Activated naive CD4-positive, alpha-beta T cell treated with anti-CD3 and anti-CD28 coated beads for 36 hours (primary cell): ENCODE measurements at regions of chr9 and their contacts with region 1.

Region 1: DNA sequence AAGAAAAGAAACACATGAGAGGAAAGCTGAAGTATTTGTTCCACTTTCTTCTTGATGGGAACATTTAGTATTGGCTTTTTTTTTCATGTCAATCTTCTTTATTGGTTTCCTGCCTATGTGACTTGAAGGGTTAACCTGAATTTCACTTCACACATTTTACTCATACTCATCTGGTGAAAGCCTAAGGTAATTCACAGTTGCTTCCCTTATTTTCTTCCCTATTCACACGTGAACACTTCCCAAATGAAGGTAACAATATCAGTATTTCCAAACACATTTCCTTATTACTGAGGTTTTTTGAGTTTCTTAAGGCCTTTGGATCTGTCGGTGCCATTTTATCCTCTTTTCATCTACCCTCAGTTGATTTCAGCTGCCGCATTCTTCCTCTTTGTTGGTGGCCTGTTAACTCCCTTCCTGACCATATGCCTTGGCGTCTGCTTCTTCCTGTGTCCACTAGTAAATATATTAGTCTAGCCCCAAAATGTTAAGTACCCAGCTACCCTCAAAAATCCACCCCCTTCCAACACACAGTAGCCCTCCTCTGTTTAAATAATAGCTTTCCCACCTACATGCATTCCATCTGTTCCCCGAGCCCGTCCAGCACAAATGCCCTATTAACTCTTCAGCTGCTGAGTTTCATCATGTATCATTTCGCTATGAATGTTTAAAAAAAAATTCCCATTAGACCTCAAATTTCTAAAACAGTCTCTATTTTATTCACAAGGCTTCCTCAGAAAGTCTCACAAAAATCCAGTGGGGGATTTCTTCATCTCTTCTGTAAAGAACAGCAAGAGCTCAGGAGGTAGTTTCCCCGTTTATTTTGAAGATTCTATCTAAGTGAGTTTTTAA is 97.3 kb downstream of the USP20 start:
- DNase-seq: no peak
- H3K4me3 Mint-ChIP-seq: peak overlapping the region; percentile 25
- H3K27ac Mint-ChIP-seq: peak overlapping the region; percentile 84
- H3K4me1 Mint-ChIP-seq: peaks cover 50% of the 10 kb centered on the region
- H3K27me3 Mint-ChIP-seq: no peaks in the 10 kb centered on the region

Region 2: GRCh38 chr9:129919841-129920240 is 12.7 kb before region 1 on chr9:
- CTCF ChIA-PET with region 1: interaction called, 3 read pairs
- intact Hi-C with region 1: loop called (anchors 1 kb)
- DNase-seq: no peak
- H3K4me3 Mint-ChIP-seq: no peak overlapping the region
- H3K27ac Mint-ChIP-seq: peak overlapping the region; percentile 86
- H3K4me1 Mint-ChIP-seq: peaks cover 49% of the 10 kb centered on the region
- H3K27me3 Mint-ChIP-seq: no peaks in the 10 kb centered on the region